Cardiac septum (tissue), 1 donor: ENCODE measurements at regions of chr6 and their contacts with region 1.

Region 1: DNA sequence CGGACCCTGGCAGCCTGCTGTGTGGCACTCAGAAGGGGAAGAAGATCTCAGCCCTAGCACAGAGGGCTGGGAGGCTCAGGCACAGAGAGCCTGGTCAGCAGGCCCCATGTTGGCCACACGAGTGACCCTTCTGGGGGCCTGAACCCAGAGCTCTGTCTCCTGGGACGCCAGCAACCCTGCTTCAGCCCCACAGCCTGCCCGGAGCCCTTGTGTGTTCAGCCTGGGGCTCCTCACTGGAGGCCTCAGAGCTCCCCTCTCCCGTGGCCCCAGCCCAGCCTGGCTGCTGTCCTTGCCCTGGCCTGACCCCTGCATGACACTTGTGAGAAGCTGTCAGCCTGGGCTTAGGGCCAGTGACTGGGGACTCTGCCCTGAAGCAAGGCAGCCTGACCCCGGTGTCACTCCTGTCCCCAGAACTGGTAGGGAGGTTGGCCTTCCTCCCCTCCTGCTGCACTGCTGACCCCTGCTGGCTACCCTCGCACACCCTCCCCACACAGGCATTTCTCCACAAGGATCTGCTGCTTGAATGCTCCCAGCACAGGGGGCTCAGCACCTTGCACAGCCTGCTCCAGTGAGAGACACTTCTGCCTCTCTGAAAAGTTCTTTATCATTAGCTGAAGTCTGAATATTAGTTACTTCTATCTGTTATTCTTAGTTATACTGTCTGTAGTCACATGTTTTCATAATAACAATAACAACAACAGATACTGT is 15.4 kb upstream of the IP6K3 start:
- DNase-seq: peak; percentile 86

Region 2: DNA sequence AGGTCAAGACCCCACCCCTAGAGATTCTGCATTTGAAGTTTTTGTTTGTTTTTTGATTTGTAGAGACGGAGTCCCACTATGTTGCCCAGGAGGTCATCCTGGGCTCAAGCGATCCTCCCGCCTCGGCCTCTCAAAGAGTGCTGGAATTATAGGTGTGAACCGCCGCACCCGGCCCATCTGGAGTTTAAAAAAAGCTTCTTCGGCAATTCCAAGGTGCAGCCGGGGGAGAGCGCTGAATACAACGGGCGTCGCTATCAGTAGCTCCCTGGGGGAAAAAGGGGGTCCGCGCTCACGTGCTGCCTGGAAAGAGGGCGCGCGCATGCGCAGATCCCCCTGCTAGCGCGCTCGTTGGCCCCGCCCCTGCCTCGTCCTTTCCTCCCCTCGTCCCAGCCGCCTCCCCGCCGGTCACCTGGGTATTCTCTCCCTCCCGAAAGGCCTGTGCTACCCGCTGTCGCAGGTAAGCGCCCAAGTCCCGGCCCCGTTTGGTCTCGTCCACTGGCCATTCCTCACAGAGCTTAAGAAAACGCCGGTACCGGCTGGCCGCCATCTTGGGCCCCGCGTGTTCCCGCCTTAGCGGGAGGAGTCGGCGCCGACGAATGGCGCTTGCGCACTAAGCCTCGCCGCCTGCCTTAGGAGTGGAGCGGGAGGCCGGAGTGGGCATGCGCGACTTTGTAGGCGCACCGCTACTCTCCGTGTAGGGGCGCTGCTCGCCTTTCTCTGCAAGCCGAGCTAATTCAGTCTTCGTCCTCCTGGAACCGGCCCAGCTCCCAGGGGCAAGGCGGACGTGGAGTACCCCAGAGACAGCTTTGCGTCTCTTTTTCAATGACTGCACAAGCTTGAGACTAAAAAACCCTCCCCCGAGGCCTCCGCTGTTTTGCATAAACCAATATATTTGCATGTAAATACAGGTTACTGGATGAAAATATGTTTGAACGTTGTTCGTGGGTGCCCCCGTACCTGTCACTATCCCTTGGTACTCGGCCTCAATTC is 50.6 kb before region 1 on chr6 and contains the start of gene UQCC2:
- intact Hi-C with region 1: loop called (anchors 2 kb)
- DNase-seq: peak; percentile 99
- total RNA-seq, gene UQCC2: 209 TPM

Region 3: GRCh38 chr6:33744001-33744848 is 17.9 kb before region 1 on chr6:
- intact Hi-C with region 1: loop called (anchors 1 kb)
- DNase-seq: peak; percentile 85

Region 4: DNA sequence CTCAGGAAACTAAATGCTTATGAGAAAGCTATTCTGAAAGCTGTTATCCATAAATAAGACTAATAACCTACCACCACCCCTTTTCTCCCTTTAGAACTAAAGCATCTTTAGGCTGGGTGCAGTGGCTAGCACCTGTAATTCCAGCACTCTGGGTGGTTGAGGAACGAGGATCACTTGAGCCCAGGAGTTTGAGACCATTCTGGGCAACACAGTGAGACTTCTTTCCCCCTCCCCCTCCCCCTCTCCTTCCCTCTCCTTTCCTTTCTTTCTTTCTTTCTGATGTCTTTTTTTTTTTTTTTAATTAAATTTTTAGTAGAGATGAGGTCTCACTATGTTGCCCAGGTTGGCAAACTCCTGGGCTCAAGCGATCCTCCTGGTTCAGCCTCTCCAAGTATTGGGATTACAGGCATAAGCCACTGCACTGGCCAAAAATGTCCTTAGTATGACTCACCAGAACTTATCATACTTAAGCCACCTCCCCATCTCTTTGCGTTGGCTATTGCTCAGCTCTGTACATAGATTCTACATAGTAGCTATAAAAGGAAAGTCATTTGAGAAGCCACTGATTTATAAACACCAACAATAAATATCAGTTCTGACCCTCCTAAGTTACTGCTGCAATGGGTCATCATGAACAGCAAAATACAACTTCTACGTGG is 848.9 kb after region 1 on chr6:
- intact Hi-C with region 1: no loop called
- DNase-seq: no peak